Cardiac septum (tissue), 1 donor: ENCODE measurements at regions of chr22 and their contacts with region 1.

Region 1: DNA sequence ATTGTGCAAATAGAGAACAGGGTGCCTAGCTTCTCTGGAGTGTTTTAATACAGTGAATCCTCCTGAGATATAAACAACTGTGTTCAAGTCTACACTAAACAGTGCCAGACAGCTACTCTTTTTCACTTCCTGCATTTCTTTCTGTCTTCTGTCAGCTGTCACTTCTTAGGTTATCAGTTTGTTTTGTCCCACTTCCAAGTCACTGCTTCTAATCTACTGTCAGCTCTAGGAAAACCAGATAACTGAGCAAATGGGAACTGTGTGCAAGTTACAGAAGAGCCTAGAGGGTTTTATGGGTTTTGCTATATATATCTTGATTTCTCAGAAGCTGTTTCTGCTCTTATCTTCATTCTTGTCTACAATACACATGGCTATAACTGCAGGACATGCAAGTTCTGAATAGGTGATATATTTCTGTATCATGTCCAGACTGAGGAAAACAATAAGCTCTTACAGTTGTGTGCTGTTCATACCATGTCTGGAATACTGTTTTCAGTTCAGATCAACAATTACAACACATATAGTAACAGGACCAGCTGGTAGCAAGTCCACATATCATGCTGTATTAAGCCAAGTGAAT is 5.8 kb downstream of the PITPNB start:
- DNase-seq: no peak

Region 2: GRCh38 chr22:27790376-27791158 is 122.7 kb before region 1 on chr22:
- intact Hi-C with region 1: no loop called
- DNase-seq: no peak

Region 3: DNA sequence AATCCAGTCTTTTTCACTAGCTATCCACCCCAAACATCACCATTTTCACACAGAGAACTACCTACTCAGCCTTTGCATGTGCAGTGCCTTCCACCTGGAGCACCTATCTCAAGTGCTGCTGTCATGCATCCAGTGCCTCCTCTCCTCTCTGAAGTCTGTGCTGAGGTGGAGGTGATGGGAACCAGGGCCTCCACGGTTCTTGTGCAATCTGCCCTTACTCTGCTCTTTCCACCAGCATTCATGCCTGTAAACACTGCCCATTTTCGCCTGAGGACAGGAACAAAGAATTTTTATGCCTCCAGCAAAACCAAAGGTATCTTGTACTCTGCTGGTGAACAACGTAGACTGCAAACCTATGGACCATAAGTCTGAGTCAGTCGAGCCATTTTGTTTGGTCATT is 21.2 kb before region 1 on chr22:
- intact Hi-C with region 1: loop called (anchors 1 kb)
- DNase-seq: no peak